Activated T-helper 2 cell treated with anti-CD3 and anti-CD28 coated beads, Interferon-gamma antibody, Interleukin-2, Interleukin-4, amounts not matched to agents 10 μg/mL and 5 μg/mL and 100 μg/mL, durations not matched to agents 14 hours and 24 hours and 36 hours (primary cell): ENCODE measurements at regions of chr15 and their contacts with region 1.

Region 1: GRCh38 chr15:38252481-38253412 is at the start of gene SPRED1:
- DNase-seq: no peak
- H3K4me3 Mint-ChIP-seq: peak within 1 kb of the TSS; percentile 81
- H3K27ac Mint-ChIP-seq: no peak within 1 kb of the TSS
- H3K4me1 Mint-ChIP-seq: peaks cover 23% of the 10 kb centered on the region
- H3K27me3 Mint-ChIP-seq: peaks cover 72% of the 10 kb centered on the region
- total RNA-seq, gene SPRED1: 0.14 and 0.46 TPM in 2 replicates

Region 2: GRCh38 chr15:37100109-37100965 is 1152.4 kb before region 1 on chr15 and contains the start of gene MEIS2:
- intact Hi-C with region 1: loop called (anchors 10 kb)
- DNase-seq: no peak
- H3K4me3 Mint-ChIP-seq: peak within 1 kb of the TSS; percentile 88
- H3K27ac Mint-ChIP-seq: peak within 1 kb of the TSS; percentile 53
- H3K4me1 Mint-ChIP-seq: peaks cover 23% of the 10 kb centered on the region
- H3K27me3 Mint-ChIP-seq: peaks cover 92% of the 10 kb centered on the region
- total RNA-seq, gene MEIS2: not detected in 2 replicates

Region 3: DNA sequence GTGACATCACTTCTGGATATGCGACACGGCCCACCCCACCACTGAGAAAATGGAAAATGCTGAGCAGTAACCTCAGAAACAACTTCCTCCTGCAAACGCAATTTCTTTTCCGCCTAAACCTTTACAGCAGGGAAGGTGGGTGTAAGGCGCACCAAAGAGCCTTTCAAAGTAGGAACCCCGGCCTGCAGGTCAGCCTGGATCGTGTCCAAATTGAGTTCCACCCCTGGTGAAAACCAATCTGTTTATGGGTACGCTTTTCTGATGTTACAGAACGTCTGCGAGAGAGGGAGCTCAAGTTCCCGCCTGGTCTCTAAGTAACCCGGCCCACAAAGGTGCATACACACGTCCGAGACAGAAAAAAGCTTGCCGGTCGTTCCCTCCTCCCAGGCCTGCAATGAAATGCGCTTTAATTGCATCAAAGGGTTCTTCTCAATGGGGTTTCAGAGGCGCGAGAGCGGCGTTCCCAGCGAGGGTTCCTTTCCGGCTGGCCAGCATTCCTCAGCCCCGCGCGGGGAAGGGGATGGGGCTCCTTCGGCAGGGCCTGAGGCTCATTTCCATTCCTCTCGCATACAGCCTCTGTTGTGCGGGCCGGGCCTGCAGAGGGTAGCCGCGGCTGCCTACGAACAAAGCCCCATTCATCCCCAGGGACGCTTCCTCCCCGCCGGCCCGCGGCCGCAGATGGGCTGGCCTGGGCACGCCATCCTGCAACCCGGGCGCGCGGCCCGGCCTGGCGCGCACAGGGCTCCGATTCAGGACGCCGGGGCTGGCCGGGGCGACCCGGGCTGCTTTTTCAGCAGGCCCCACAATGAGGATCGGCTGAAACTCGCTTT is 180.2 kb before region 1 on chr15:
- intact Hi-C with region 1: loop called (anchors 5 kb)
- DNase-seq: peak; percentile 11
- H3K4me3 Mint-ChIP-seq: peak overlapping the region; percentile 50
- H3K27ac Mint-ChIP-seq: no peak overlapping the region
- H3K4me1 Mint-ChIP-seq: peaks cover 28% of the 10 kb centered on the region
- H3K27me3 Mint-ChIP-seq: peaks cover 83% of the 10 kb centered on the region

Region 4: DNA sequence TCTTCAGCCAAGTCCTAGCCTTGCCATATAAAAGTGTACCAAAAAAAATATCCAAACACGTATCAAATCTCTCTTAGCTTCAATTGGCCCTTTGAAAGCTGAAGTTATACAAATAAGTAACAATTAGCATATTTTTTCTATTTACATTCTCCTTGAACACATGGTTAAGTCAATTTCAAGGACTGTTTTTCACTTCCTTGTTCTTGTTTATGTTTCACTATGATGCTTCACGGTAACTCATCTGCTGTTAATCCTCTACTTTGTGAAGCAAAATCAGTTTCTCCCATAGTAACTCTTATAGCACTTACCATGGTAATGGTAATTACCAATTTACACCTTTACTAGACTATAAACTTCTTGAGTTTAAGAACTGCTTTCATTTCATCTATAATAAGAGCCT is 10.7 kb before region 1 on chr15:
- intact Hi-C with region 1: no loop called
- DNase-seq: no peak
- H3K4me3 Mint-ChIP-seq: no peak overlapping the region
- H3K27ac Mint-ChIP-seq: no peak overlapping the region
- H3K4me1 Mint-ChIP-seq: no peaks in the 10 kb centered on the region
- H3K27me3 Mint-ChIP-seq: peaks cover 16% of the 10 kb centered on the region

Region 5: DNA sequence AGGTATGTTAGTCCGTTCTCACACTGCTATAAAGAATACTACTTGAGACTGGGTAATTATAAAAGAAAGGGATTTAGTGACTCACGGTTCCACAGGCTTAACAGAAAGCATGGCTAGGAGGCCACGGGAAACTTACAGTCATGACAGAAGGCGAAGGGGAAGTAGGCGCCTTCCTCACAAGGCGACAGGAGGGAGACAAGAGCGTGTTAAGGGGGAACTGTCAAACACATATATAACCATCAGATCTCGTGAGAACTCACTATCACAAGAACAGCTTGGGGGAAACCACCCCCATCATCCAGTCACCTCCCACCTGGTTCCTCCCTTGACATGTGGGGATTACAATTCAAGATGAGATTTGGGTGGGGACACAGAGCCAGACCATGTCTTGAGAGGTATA is 30.3 kb after region 1 on chr15:
- intact Hi-C with region 1: no loop called
- DNase-seq: no peak
- H3K4me3 Mint-ChIP-seq: no peak overlapping the region
- H3K27ac Mint-ChIP-seq: no peak overlapping the region
- H3K4me1 Mint-ChIP-seq: no peaks in the 10 kb centered on the region
- H3K27me3 Mint-ChIP-seq: peaks cover 19% of the 10 kb centered on the region

Region 6: DNA sequence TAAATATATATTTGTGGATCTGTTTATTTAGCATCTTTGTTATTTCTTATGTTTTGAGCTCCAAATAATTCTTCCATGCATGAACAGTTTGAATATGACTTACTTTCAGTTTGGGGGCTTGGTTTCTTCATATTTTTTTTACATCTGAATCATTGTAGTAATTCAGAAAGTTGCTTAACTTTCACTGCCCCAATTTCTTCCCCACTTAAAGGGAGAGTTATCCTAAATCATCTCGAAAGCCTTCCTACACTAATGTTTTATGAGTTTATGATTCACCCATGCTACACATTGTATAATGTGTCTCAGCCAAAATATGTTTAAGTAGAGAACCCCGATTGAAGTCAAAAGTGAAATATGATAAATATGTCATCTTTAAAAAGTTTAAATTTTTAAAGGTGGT is 47.6 kb after region 1 on chr15:
- intact Hi-C with region 1: loop called (anchors 10 kb)
- DNase-seq: no peak
- H3K4me3 Mint-ChIP-seq: no peak overlapping the region
- H3K27ac Mint-ChIP-seq: no peak overlapping the region
- H3K4me1 Mint-ChIP-seq: peaks cover 3% of the 10 kb centered on the region
- H3K27me3 Mint-ChIP-seq: peaks cover 21% of the 10 kb centered on the region